ENCODE measurements at regions of chr7 and their contacts with region 1.

Region 1: DNA sequence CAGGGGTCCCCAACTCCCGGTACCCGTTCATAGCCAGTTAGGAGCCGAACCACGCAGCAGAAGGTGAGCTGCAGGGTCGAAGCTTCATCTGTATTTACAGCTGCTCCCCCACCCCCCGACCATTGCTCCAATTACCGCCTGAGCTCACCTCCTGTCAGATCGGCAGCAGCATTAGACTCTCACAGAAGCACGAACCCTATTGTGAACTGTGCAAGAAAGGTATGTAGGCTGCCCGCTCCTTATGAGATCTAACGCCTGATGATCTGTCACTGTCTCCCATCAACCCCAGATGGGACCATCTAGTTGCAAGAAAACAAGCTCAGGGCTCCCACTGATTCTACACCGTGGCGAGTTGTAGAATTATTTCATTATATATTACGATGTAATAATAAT is 14.6 kb upstream of the AZGP1 start:
- DNase-seq: no peak
- H3K4me3 ChIP-seq: peak overlapping the region in 1 of 4 donors; percentile 49
- H3K27ac ChIP-seq: no peak overlapping the region
- H3K4me1 ChIP-seq: peaks cover 4 to 21% (median 10%) of the 10 kb centered on the region in 3 donors
- H3K27me3 ChIP-seq: no peaks in the 10 kb centered on the region
- CTCF ChIP-seq: no peak
- POLR2A ChIP-seq: no peak

Region 2: DNA sequence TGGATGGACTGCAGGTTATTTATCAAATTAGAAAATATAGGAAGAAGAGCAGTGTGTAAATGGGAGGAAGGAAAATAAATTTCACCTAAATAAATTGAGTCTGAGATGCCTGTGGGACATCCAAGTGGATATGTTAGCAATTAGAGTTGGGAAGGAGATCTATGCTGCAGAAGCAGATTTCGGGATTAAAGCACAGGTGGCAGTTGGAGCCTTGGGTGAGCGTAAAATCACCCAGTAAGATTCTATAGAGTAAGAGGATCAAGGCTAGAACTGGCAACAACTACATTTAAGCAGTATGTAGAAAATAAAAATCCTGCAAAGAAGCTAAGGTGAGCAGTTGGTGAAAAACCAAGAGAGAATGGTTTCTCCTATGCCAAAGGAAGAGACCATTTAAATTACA is 79.5 kb before region 1 on chr7:
- intact Hi-C with region 1: loop called (anchors 5 kb)
- DNase-seq: no peak
- H3K4me3 ChIP-seq: no peak overlapping the region
- H3K27ac ChIP-seq: no peak overlapping the region
- H3K4me1 ChIP-seq: peaks cover 0 to 25% (median 3%) of the 10 kb centered on the region in 3 donors
- H3K27me3 ChIP-seq: no peaks in the 10 kb centered on the region
- CTCF ChIP-seq: no peak
- POLR2A ChIP-seq: no peak

Region 3: DNA sequence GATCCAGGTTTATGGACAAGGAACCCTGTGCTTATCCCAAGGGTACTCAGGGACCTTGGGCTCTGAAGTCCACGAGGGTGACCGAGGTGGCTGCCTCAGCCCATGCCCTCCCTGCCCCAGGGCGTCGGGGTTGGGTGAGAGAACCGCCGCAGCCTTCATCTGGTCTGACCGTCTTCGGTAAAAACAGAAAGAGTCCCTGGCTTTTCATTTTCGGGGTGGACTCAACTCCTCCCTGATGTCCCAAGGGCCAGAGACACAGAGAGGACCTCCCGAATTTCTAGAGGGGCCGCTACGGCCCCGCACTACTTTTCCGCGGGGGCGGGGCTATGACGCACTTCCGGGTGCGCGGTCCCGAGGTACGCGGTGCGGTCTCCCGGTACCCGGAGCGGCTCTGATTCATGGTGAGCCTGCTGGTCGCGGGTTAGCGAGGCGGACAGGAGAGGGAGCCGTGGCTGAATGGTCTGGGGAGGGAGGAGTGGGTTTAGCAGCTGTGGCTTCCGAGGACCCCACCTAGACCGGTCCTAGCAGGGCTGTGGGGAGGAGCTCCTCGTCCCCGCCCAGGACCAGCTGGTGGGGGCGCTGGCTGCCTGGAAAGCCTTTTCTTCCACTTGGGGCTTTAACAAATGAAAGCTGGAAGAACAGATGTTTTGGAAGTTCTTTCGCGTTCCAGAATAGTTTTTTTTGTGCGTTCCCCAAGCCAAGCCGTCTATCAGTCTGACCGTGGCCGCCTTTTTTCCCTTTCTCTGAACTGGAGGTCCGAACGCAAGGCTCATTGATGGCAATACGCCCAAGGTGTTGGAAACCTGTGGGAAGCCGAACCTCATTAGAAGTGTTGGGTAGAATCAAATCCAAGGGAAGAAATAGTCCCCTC is 59.2 kb after region 1 on chr7 and contains the start of gene ZSCAN21:
- intact Hi-C with region 1: loop called (anchors 5 kb)
- DNase-seq: no peak
- H3K4me3 ChIP-seq: peak within 1 kb of the TSS; percentile 53 to 88 (median 78)
- H3K27ac ChIP-seq: peak within 1 kb of the TSS; percentile 91 to 98 (median 98)
- H3K4me1 ChIP-seq: peaks cover 11 to 45% (median 13%) of the 10 kb centered on the region in 3 donors
- H3K27me3 ChIP-seq: no peaks in the 10 kb centered on the region
- CTCF ChIP-seq: peak in 1 of 6 experiments; percentile 9
- POLR2A ChIP-seq: peak in 3 of 4 donors; percentile 25 to 77 (median 75)
- total RNA-seq, gene ZSCAN21: 3.7 to 12.0 (median 8.0) TPM

Measured in esophagus squamous epithelium (tissue), 5 donors.